CD8-positive, alpha-beta T cell (primary cell): ENCODE measurements at regions of chr19 and their contacts with region 1.

Region 1: GRCh38 chr19:48363810-48364563 is at the starts of genes SYNGR4 and TMEM143:
- DNase-seq: peak; percentile 96 to 100 (median 98)
- ATAC-seq: peak; percentile 88
- H3K4me3 ChIP-seq: peak within 1 kb of the TSS; percentile 82 to 90
- H3K4me3 Mint-ChIP-seq: peak within 1 kb of the TSS; percentile 83
- H3K27ac ChIP-seq: peak within 1 kb of the TSS; percentile 64 to 89
- H3K27ac Mint-ChIP-seq: peak within 1 kb of the TSS; percentile 86
- H3K4me1 ChIP-seq: peaks cover 17% of the 10 kb centered on the region
- H3K4me1 Mint-ChIP-seq: peaks cover 19% of the 10 kb centered on the region
- H3K27me3 ChIP-seq: no peaks in the 10 kb centered on the region
- H3K27me3 Mint-ChIP-seq: no peaks in the 10 kb centered on the region
- CTCF ChIP-seq: no peak
- total RNA-seq, gene SYNGR4: not detected
- total RNA-seq, gene TMEM143: 6.4 to 7.7 TPM

Region 2: GRCh38 chr19:48149430-48149829 is 214.6 kb before region 1 on chr19:
- CTCF ChIA-PET with region 1: no interaction called
- POLR2A ChIA-PET with region 1: no interaction called
- intact Hi-C with region 1: no loop called
- DNase-seq: no peak
- ATAC-seq: no peak
- H3K4me3 ChIP-seq: no peak overlapping the region
- H3K4me3 Mint-ChIP-seq: no peak overlapping the region
- H3K27ac ChIP-seq: no peak overlapping the region
- H3K27ac Mint-ChIP-seq: no peak overlapping the region
- H3K4me1 ChIP-seq: no peaks in the 10 kb centered on the region
- H3K4me1 Mint-ChIP-seq: no peaks in the 10 kb centered on the region
- H3K27me3 ChIP-seq: no peaks in the 10 kb centered on the region
- H3K27me3 Mint-ChIP-seq: no peaks in the 10 kb centered on the region
- CTCF ChIP-seq: no peak

Region 3: GRCh38 chr19:48333467-48334384 is 30.3 kb before region 1 on chr19:
- CTCF ChIA-PET with region 1: interaction called, 10 read pairs
- POLR2A ChIA-PET with region 1: interaction called, 32 read pairs
- intact Hi-C with region 1: loop called (anchors 1 kb)
- DNase-seq: peak; percentile 88 to 97 (median 93)
- ATAC-seq: peak; percentile 55
- H3K4me3 ChIP-seq: peak overlapping the region; percentile 73 to 78
- H3K4me3 Mint-ChIP-seq: peak overlapping the region; percentile 94
- H3K27ac ChIP-seq: peak overlapping the region; percentile 65 to 98
- H3K27ac Mint-ChIP-seq: peak overlapping the region; percentile 96
- H3K4me1 ChIP-seq: peaks cover 41% of the 10 kb centered on the region
- H3K4me1 Mint-ChIP-seq: peaks cover 51% of the 10 kb centered on the region
- H3K27me3 ChIP-seq: no peaks in the 10 kb centered on the region
- H3K27me3 Mint-ChIP-seq: no peaks in the 10 kb centered on the region
- CTCF ChIP-seq: peak; percentile 79

Region 4: GRCh38 chr19:48403606-48404005 is 39.6 kb after region 1 on chr19:
- CTCF ChIA-PET with region 1: no interaction called
- POLR2A ChIA-PET with region 1: interaction called, 4 read pairs
- intact Hi-C with region 1: loop called (anchors 1 kb)
- DNase-seq: peak in 8 of 9 experiments; percentile 23 to 83 (median 56)
- ATAC-seq: peak; percentile 59
- H3K4me3 ChIP-seq: no peak overlapping the region
- H3K4me3 Mint-ChIP-seq: no peak overlapping the region
- H3K27ac ChIP-seq: peak overlapping the region in 1 of 2 experiments; percentile 40
- H3K27ac Mint-ChIP-seq: no peak overlapping the region
- H3K4me1 ChIP-seq: peaks cover 4% of the 10 kb centered on the region
- H3K4me1 Mint-ChIP-seq: peaks cover 12% of the 10 kb centered on the region
- H3K27me3 ChIP-seq: no peaks in the 10 kb centered on the region
- H3K27me3 Mint-ChIP-seq: peaks cover 8% of the 10 kb centered on the region
- CTCF ChIP-seq: no peak

Region 5: GRCh38 chr19:48492925-48493717 is 129.1 kb after region 1 on chr19:
- CTCF ChIA-PET with region 1: interaction called, 3 read pairs
- POLR2A ChIA-PET with region 1: no interaction called
- intact Hi-C with region 1: loop called in 1 of 2 experiments (anchors 5 kb)
- DNase-seq: peak; percentile 68 to 89 (median 80)
- ATAC-seq: peak; percentile 79
- H3K4me3 ChIP-seq: peak overlapping the region; percentile 41 to 58
- H3K4me3 Mint-ChIP-seq: peak overlapping the region; percentile 71
- H3K27ac ChIP-seq: no peak overlapping the region
- H3K27ac Mint-ChIP-seq: no peak overlapping the region
- H3K4me1 ChIP-seq: peaks cover 38% of the 10 kb centered on the region
- H3K4me1 Mint-ChIP-seq: peaks cover 38% of the 10 kb centered on the region
- H3K27me3 ChIP-seq: peaks cover 0 to 19% of the 10 kb centered on the region in 2 experiments
- H3K27me3 Mint-ChIP-seq: peaks cover 3% of the 10 kb centered on the region
- CTCF ChIP-seq: no peak

Region 6: GRCh38 chr19:49640113-49640898 is 1276.3 kb after region 1 on chr19 and contains the start of gene RRAS:
- CTCF ChIA-PET with region 1: no interaction called
- POLR2A ChIA-PET with region 1: no interaction called
- intact Hi-C with region 1: loop called in 1 of 2 experiments (anchors 2 kb)
- DNase-seq: peak; percentile 98 to 100 (median 99)
- ATAC-seq: peak; percentile 66
- H3K4me3 ChIP-seq: peak within 1 kb of the TSS; percentile 64 to 75
- H3K4me3 Mint-ChIP-seq: peak within 1 kb of the TSS; percentile 95
- H3K27ac ChIP-seq: peak within 1 kb of the TSS; percentile 64 to 98
- H3K27ac Mint-ChIP-seq: peak within 1 kb of the TSS; percentile 96
- H3K4me1 ChIP-seq: peaks cover 51% of the 10 kb centered on the region
- H3K4me1 Mint-ChIP-seq: peaks cover 58% of the 10 kb centered on the region
- H3K27me3 ChIP-seq: no peaks in the 10 kb centered on the region
- H3K27me3 Mint-ChIP-seq: no peaks in the 10 kb centered on the region
- CTCF ChIP-seq: no peak
- total RNA-seq, gene RRAS: 3.6 to 4.9 TPM

Region 7: DNA sequence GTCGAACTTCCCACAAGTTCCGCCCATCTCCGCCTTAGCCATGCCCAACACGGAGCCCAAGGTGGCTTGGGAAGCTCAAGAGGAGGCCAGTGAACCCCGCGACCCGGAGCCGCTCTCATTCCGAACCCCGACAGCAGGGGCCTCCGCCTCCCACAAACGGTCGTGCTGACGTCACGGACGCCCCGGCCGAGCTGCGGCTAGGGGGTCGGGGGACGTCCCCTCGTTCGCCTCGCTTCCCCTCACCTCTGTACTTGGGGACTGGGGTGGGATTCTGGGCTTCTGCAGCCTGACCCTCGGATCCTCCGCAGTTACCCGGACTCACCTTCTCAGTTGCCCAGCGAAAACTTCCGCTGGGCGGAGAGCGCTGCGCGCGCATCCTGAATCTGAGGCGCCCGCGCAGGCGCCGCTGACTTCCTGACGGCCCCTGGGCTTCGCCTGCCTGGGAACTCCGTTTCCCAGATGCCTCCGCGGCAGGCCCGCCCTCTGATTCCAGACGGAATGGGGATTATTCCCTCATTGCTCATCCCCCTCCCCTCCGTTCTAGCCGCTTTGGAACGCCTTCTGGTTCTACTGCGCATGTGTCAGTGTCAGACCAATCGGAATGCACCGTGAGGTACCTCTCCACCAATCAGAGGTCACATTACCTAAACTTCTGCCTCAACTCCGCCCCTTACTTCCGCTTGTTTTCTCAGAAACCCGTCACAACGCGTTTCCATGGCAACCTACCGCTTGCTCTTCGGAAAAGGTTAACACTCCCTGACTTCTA is 1661.2 kb after region 1 on chr19 and contains the start of gene VRK3:
- CTCF ChIA-PET with region 1: no interaction called
- POLR2A ChIA-PET with region 1: no interaction called
- intact Hi-C with region 1: loop called in 1 of 2 experiments (anchors 5 kb)
- DNase-seq: peak; percentile 95 to 100 (median 97)
- ATAC-seq: peak; percentile 86
- H3K4me3 ChIP-seq: peak within 1 kb of the TSS; percentile 88 to 98
- H3K4me3 Mint-ChIP-seq: peak within 1 kb of the TSS; percentile 90
- H3K27ac ChIP-seq: peak within 1 kb of the TSS; percentile 98
- H3K27ac Mint-ChIP-seq: peak within 1 kb of the TSS; percentile 98
- H3K4me1 ChIP-seq: peaks cover 29% of the 10 kb centered on the region
- H3K4me1 Mint-ChIP-seq: peaks cover 53% of the 10 kb centered on the region
- H3K27me3 ChIP-seq: no peaks in the 10 kb centered on the region
- H3K27me3 Mint-ChIP-seq: no peaks in the 10 kb centered on the region
- CTCF ChIP-seq: no peak
- total RNA-seq, gene VRK3: 71.1 to 73.1 TPM